Right ventricle myocardium superior (tissue), 1 donor: ENCODE measurements at regions of chr3 and their contacts with region 1.

Region 1: GRCh38 chr3:123652346-123652984 is 67.6 kb upstream of the HACD2 start:
- DNase-seq: peak; percentile 87
- ATAC-seq: peak; percentile 95

Region 2: GRCh38 chr3:123431658-123432324 is 220.7 kb before region 1 on chr3:
- intact Hi-C with region 1: no loop called
- DNase-seq: no peak
- ATAC-seq: no peak

Region 3: DNA sequence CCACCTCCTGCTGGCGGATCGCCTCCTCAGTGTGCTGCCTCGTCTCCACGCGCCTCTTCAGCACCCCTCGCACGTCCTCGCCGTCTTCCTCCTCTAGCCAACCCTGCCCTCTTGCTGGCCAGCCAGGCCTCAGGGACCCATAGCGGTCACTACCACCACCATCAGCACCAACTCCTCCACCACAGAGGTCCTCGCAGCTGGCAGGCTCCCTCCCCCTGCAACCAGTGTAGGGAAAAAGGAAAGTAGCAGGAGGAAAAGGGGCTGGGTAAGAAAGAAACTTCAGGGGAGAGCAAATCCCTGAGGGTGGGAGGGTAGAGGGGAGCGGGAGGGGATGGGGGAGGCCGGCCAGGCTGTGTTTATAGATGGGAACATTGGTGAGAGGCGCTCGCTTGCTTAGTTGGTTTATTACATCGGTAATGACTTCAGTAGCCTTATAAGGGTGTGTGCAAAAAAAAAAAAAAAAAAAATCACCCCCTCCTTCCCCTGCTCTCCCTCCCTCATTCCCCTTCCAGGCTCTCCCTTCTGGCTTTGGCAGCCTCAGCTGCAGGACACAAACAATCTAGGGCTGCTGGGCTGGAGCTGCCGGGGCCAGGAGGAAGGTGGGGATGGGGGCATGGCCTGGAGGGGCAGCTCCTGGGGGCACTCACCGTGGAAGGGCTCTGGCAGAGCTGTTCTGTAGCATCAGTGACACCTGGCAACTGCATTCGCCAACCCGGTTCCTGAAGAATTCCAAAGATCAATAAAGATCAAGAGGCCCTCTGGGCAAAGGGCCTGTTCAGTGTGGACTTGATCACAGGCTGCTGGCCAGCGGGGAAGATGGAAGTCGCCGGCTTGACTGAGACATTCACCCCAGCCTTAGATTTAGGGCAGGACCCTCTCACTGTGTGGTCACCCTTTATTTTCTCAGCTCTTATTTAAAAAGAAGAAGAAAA is 48.6 kb after region 1 on chr3:
- intact Hi-C with region 1: loop called (anchors 5 kb)
- DNase-seq: no peak
- ATAC-seq: peak; percentile 19

Region 4: DNA sequence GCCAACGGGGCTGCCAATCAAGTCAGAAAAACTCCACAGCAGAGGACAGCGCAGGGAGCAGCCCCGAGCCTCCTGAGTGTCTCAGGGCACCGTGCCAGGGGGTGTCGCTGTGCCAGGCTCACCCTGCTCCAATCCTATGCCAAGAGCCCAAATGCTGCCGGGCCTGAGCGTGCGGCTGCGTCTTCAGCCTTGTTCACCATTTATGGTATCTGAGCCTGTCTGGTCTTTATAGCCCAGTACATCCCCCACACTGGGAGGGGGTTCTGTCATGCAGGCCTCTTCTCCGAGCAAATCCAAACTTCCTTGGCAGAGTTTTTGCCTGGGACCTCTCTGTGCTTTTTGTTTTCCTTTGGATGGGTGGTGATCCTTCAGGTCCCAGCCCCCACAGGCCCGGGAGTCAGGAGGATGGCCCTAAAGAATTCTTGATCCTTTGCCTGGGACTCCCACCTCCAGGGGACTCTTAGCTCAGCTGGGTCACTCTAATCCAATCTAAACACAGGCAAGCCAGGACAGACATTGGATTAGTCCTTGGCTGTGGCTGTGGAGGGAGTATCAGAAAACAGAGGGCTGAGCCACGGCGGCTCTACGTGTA is 67.5 kb after region 1 on chr3:
- intact Hi-C with region 1: loop called (anchors 5 kb)
- DNase-seq: peak; percentile 83
- ATAC-seq: peak; percentile 85